ENCODE measurements at regions of chr5 and their contacts with region 1.

Region 1: DNA sequence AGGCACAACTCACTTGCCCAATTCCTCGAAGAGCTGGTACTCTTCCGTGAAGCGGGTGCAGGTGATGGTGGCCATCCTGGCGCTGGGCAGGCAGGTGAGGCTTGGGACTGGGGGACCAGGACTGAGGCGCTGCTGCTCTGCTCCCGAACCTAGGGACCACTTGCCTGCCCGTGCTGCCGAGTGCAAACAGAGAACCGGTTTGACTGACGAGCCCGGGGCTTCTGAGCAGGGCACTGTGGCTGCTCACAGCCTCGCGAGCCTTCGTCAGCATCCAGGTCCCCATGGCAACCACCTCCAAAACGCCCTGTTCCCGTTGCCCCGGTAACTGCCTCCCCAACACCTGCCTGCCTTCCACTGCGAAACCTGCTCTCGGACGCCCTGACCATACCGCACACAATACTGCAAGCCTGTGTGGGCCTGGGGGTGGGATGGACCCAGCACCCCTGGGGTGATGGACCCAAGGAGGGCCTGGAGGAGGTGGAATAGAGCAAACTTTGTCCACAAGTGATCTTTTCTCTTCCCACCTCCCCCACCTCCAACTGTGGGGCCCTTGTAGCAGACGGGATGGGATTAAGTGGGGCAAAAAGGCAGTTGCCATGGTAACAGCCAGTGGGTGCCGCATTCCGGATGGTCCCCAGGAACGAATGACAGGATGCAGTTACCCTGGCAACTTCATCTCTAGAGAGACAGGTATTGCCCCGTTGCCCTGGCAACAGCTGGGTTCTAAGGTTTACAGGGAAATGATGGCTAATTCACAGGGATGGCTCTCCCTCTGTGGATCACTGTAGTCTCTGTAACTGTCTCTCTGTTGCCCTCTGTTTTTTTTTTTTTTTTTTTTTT is at the start of gene CAMK2A:
- DNase-seq: no peak
- ATAC-seq: no peak
- H3K4me3 ChIP-seq: no peak within 1 kb of the TSS
- H3K27ac ChIP-seq: no peak within 1 kb of the TSS
- H3K4me1 ChIP-seq: peaks cover 3% of the 10 kb centered on the region
- H3K27me3 ChIP-seq: no peaks in the 10 kb centered on the region; the same call in 1 of the 2 replicates
- CTCF ChIP-seq: no peak
- total RNA-seq, gene CAMK2A: 0.15 TPM in 1 of 2 replicates, not detected in the other

Region 2: DNA sequence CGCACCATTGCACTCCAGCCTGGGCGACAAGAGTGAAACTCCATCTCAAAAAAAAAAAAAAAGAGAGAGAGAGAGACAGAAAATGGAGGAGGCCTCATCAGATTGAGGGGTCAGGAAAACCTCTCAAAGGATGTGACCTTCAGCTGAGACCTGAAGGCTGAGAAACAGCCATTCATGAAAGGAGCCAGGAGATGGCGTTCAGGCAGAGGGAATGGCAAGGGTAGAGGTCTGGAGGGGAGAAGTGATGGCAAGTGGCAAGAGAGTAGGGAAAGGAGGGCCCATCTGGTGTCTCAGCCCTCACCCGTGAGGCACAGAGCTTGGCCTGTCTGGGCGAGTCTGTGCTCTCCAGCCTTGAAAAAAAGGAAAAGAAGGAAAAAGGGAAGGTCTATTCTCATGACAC is 17.2 kb before region 1 on chr5:
- CTCF ChIA-PET with region 1: no interaction called
- POLR2A ChIA-PET with region 1: interaction called, 15 read pairs
- intact Hi-C with region 1: no loop called
- DNase-seq: peak; percentile 72
- ATAC-seq: peak; percentile 74
- H3K4me3 ChIP-seq: no peak overlapping the region
- H3K27ac ChIP-seq: no peak overlapping the region
- H3K4me1 ChIP-seq: no peaks in the 10 kb centered on the region
- H3K27me3 ChIP-seq: 0 out of 2 replicates have a peak, but pooled peaks cover 6% of the 10 kb centered on the region
- CTCF ChIP-seq: peak; percentile 70

Region 3: GRCh38 chr5:150829744-150830143 is 540.0 kb after region 1 on chr5:
- CTCF ChIA-PET with region 1: no interaction called
- POLR2A ChIA-PET with region 1: no interaction called
- intact Hi-C with region 1: no loop called
- DNase-seq: no peak
- ATAC-seq: no peak
- H3K4me3 ChIP-seq: no peak overlapping the region
- H3K27ac ChIP-seq: no peak overlapping the region
- H3K4me1 ChIP-seq: no peaks in the 10 kb centered on the region
- H3K27me3 ChIP-seq: no peaks in the 10 kb centered on the region
- CTCF ChIP-seq: no peak

Region 4: GRCh38 chr5:150918613-150919012 is 628.8 kb after region 1 on chr5:
- CTCF ChIA-PET with region 1: no interaction called
- POLR2A ChIA-PET with region 1: no interaction called
- intact Hi-C with region 1: no loop called
- DNase-seq: no peak
- ATAC-seq: no peak
- H3K4me3 ChIP-seq: no peak overlapping the region
- H3K27ac ChIP-seq: no peak overlapping the region
- H3K4me1 ChIP-seq: no peaks in the 10 kb centered on the region
- H3K27me3 ChIP-seq: no peaks in the 10 kb centered on the region
- CTCF ChIP-seq: no peak

Measured in PC-3 (cell line).